Dendritic cell treated with granulocyte-macrophage colony-stimulating factor and Interleukin-4, amounts not matched to agents 40 ng/mL and 50 ng/mL, for 4 days (primary cell): ENCODE measurements at regions of chr4 and their contacts with region 1.

Region 1: GRCh38 chr4:88533937-88534750 is 10.6 kb upstream of the PYURF start:
- H3K4me3 Mint-ChIP-seq: no peak overlapping the region
- H3K27ac Mint-ChIP-seq: no peak overlapping the region
- H3K4me1 Mint-ChIP-seq: peaks cover 3% of the 10 kb centered on the region
- H3K27me3 Mint-ChIP-seq: no peaks in the 10 kb centered on the region

Region 2: GRCh38 chr4:88585917-88586316 is 51.8 kb after region 1 on chr4:
- intact Hi-C with region 1: loop called (anchors 5 kb)
- H3K4me3 Mint-ChIP-seq: no peak overlapping the region
- H3K27ac Mint-ChIP-seq: no peak overlapping the region
- H3K4me1 Mint-ChIP-seq: peaks cover 8% of the 10 kb centered on the region
- H3K27me3 Mint-ChIP-seq: no peaks in the 10 kb centered on the region

Region 3: GRCh38 chr4:88659055-88659889 is 125.1 kb after region 1 on chr4:
- intact Hi-C with region 1: loop called (anchors 5 kb)
- H3K4me3 Mint-ChIP-seq: no peak overlapping the region
- H3K27ac Mint-ChIP-seq: no peak overlapping the region
- H3K4me1 Mint-ChIP-seq: no peaks in the 10 kb centered on the region
- H3K27me3 Mint-ChIP-seq: no peaks in the 10 kb centered on the region

Region 4: DNA sequence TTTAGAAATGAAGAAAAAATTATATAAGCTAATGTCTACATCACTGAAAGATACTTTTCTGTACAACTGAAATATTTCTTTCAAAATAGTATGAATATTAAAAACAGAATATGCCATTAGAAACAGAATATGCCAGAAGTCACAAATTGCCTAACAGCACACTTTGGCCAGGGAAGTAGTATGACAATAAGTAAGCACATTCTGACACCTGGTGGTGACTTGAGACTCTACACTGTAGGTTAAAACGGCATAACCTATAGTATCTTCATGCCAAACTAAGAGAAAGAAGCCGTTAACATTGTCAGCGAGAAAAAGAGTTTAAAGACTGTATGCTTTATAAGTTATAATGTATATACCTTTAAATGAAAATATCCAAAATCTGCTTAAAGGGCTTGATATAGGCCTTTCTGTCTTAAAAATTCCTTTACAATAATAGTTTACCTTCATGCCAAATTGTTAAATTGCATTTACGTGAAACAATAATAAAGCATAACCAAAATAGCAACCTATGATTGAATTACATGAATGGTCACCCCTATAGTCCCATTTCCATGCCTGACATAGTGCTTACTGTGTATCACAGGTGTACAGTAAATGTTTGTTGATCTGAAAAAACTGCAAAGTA is 490.0 kb after region 1 on chr4:
- intact Hi-C with region 1: loop called (anchors 5 kb)
- H3K4me3 Mint-ChIP-seq: no peak overlapping the region
- H3K27ac Mint-ChIP-seq: no peak overlapping the region
- H3K4me1 Mint-ChIP-seq: peaks cover 6% of the 10 kb centered on the region
- H3K27me3 Mint-ChIP-seq: no peaks in the 10 kb centered on the region